Heart right ventricle (tissue), 16 donors: ENCODE measurements at regions of chr3 and their contacts with region 1.

Region 1: GRCh38 chr3:121995161-121996137 is 26.6 kb downstream of the ILDR1 start:
- DNase-seq: peak; percentile 22 to 44
- ATAC-seq: peak; percentile 56 to 80 (median 72)
- H3K4me3 ChIP-seq: no peak overlapping the region
- H3K27ac ChIP-seq: peak overlapping the region in 5 of 10 donors; percentile 14 to 84 (median 41)
- H3K4me1 ChIP-seq: peaks cover 0 to 56% (median 0%) of the 10 kb centered on the region in 9 donors
- H3K27me3 ChIP-seq: no peaks in the 10 kb centered on the region
- CTCF ChIP-seq: peak in 8 of 9 donors; percentile 18 to 66 (median 50)

Region 2: GRCh38 chr3:121552379-121552778 is 443.1 kb before region 1 on chr3:
- intact Hi-C with region 1: loop called in 7 of 10 experiments (anchors 5 to 10 kb)
- DNase-seq: no peak
- ATAC-seq: no peak
- H3K4me3 ChIP-seq: peak overlapping the region in 3 of 10 donors; percentile 1 to 27 (median 11)
- H3K27ac ChIP-seq: no peak overlapping the region
- H3K4me1 ChIP-seq: peaks cover 0 to 7% (median 0%) of the 10 kb centered on the region in 9 donors
- H3K27me3 ChIP-seq: no peaks in the 10 kb centered on the region
- CTCF ChIP-seq: no peak

Region 3: DNA sequence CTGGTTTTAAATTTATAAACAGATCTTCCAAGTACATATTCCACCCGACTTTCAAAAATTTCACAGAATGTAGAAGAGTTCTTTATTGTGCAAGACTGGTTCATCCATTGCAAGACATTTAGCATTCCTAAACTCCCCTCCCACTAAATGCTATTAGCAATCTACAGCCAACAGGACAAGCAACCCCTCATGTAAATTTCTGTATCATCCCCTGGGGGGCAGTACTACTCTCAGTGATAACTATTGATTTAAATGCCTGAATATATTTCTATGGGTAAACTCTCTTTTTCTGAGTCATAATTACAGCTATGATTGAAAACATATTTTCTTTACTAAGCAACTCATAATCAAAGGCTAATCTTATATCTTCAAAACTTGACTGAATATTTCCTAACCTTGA is 111.9 kb before region 1 on chr3:
- intact Hi-C with region 1: loop called in 1 of 10 experiments (anchors 10 kb)
- DNase-seq: no peak
- ATAC-seq: no peak
- H3K4me3 ChIP-seq: no peak overlapping the region
- H3K27ac ChIP-seq: no peak overlapping the region
- H3K4me1 ChIP-seq: no peaks in the 10 kb centered on the region
- H3K27me3 ChIP-seq: no peaks in the 10 kb centered on the region
- CTCF ChIP-seq: peak in 5 of 9 donors; percentile 14 to 48 (median 24)